AG04449 (cell line): ENCODE measurements at regions of chr6 and their contacts with region 1.

Region 1: DNA sequence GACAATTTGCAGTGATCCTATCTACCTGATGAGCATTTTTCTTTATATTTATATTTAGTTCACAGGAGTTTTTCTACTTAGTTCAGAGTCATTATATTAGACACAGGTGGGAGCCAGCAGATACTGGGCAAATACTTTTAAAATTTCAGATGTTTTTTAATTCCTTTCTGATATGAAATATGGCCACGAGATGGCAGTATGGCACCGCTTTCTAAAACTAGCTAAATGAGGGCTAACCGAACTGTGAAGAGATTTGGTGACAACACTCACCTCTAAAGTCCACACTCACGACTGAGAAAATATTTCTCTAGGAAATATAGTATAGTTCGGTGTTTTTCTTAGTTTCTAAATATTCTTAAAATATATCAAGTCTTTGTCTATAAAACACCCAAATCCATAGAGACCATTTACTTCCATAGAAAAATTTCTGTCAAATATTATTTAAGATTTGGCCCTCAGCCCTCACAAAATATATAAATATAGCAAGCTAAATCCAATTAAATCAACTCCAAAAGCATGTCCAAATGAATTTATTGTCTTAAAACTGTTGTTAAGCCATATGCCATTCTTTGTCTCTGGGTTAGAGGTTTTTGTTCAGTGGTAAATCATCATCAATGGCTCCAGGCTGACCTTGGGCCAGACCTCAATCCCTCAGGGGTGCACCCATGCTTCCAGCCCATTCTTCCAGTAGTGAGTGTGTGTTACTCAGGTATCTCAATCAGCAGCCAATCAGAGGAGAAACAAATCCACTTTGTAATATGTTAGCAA is 63.6 kb downstream of the HUS1B start:
- DNase-seq: peak; percentile 4
- H3K4me3 ChIP-seq: no peak overlapping the region
- CTCF ChIP-seq: peak; percentile 27

Region 2: GRCh38 chr6:446418-447366 is 146.6 kb before region 1 on chr6:
- CTCF ChIA-PET with region 1: no interaction called
- POLR2A ChIA-PET with region 1: no interaction called
- DNase-seq: no peak
- H3K4me3 ChIP-seq: no peak overlapping the region
- CTCF ChIP-seq: no peak

Region 3: DNA sequence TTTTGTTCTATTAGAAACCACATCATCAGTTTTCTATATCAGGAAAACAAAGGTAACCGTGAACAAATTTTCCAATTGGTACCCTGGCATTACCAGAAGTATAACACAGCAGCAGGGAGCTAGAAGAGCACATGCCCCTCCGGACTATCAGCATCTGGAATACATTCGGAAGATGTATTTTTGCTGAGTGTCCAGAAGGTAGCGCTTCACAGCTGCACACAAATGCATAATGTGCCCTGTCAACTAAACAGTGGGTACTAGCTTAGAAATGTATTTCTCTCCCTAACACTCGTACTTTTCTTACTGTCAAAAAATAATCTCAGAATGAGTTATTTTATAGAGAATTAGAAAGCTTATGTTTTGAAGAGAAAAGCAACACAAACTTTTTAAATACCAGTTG is 14.0 kb before region 1 on chr6:
- CTCF ChIA-PET with region 1: interaction called, 51 read pairs
- POLR2A ChIA-PET with region 1: no interaction called
- DNase-seq: no peak
- H3K4me3 ChIP-seq: no peak overlapping the region
- CTCF ChIP-seq: peak; percentile 46

Region 4: DNA sequence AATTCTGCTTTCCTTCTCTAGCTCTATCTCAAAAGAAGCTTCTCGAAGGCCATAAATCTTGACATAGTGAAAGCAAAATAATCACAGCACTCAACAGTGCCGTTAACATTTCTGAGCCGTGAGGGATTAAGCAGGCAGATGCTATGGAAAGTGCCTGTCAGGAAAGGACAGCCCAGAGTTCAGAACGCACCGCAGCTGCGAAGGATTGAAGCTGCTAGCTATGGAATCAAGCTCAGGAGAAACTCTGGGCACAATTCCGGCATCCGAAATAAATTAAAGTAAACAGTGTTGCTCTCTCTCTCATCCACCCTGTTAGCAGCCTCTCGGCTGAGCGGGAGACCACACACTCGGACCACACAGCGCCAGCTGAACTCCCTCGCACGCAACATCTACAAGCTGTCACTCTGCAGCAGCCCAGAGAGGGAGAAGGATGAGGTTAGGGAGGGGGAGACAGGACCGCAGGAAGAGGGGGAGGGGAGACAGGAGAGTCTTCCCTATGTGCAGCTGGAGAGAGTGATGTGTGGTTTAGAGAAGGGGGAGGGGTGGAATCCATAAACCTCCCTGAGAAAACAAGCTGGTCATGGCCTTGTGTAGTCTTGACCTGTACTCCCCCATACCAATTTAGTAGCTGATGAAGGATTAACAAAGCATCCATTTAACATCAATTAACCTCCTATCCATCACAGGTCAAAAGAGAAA is 90.6 kb after region 1 on chr6:
- CTCF ChIA-PET with region 1: interaction called, 11 read pairs
- POLR2A ChIA-PET with region 1: no interaction called
- DNase-seq: peak; percentile 38
- H3K4me3 ChIP-seq: peak overlapping the region; percentile 51
- CTCF ChIP-seq: no peak

Region 5: GRCh38 chr6:747028-747427 is 153.7 kb after region 1 on chr6:
- CTCF ChIA-PET with region 1: no interaction called
- POLR2A ChIA-PET with region 1: no interaction called
- DNase-seq: no peak
- H3K4me3 ChIP-seq: no peak overlapping the region
- CTCF ChIP-seq: no peak

Region 6: DNA sequence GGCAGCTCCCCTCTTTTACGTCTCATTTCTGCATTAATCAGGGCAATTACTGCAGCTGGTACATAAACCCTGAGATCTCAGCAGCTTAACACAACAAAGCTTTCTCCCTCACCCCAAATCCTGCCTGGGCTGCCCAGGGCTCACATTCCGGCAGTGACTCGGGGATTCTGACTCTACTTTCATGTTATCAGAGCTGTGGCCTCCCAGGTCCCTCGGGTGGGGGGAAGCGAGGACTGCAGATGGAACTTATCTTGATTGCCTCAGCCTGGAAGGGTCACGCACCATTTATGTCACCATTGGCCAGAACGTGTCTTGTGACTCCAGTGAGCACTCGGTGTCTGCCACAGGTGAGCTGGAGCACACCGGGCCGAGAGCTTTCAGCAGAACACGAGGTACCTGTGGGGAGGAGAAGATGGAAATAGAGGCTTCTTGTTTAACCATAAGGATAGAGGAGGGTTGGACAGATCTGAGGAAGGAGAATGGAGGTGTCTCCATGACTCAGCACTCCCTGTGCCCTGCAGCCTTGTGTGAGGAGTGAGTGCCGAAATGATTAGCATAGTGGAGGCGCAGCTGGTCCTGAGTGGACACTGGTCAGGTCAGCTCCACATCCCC is 188.1 kb after region 1 on chr6:
- CTCF ChIA-PET with region 1: interaction called, 11 read pairs
- POLR2A ChIA-PET with region 1: no interaction called
- DNase-seq: no peak
- H3K4me3 ChIP-seq: no peak overlapping the region
- CTCF ChIP-seq: no peak

Region 7: DNA sequence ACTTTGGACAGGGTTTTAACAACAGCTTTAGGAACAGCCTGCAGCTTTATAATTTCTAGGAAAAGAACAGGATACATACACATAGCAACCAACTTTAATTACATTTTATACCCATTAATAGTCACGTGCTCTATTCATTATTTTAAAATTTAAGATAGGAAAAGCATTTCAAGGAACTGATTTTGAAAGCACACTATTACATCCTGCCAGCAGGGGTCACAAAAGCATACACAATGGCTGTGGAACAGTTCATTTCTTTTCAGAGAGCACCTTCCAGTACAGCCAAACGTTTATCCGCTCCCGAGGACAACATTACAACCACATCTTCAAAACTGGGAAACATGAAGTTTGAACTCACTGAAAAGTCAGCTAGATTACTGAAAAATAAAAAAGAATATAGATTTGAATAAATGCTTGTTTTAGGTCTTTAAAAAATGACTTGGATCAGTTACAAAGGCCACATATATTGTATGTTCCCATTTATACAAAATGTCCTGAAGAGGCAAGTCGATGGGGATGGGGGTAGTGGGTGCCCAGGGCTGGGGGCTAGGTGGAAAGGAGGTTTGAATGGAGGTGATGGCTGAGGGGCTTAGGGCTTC is 204.3 kb after region 1 on chr6:
- CTCF ChIA-PET with region 1: interaction called, 10 read pairs
- POLR2A ChIA-PET with region 1: no interaction called
- DNase-seq: no peak
- H3K4me3 ChIP-seq: no peak overlapping the region
- CTCF ChIP-seq: peak; percentile 62

Region 8: DNA sequence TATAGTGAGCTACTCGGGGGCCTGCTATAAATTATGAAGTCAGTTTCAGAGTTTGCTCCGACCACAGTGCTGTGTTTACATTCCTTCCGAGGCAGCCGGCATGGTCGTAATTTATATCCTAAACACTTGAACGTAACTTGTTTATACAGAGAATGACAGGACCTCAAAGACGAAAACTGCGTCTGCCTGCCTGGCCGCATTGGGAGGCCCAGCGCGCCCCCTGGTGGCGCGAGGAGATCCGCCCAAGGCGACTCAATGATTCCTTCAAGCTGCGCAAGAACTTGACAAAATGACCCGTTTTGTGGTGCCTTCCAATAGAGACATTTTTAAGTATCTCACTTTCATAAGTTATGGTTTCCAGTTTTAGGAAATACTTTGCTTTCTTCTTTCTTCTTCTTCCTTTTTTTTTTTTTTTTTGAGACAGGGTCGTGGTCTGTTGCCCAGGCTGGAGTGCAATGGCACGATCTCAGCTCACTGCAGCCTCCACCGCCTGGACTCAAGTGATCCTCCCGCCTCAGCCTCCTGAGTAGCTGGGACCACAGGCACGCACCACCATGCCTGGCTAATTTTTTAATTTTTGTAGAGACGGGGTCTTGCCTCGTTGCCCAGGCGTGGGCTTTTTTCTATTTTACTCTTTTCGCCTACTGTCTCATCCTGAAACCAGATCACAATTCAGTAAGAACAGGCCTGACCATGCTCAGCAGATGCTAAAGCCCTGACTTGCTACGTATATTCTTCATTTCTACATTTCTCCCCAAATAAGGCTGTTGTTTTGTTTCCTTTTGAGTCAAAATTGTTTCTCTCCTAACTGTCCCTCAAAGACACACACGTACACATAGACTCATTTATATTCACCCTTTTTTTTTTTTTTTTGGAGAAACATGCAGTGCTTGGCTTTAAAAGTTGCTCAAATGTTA is 803.9 kb after region 1 on chr6:
- CTCF ChIA-PET with region 1: interaction called, 33 read pairs
- POLR2A ChIA-PET with region 1: no interaction called
- DNase-seq: no peak
- H3K4me3 ChIP-seq: no peak overlapping the region
- CTCF ChIP-seq: peak; percentile 92

Region 9: GRCh38 chr6:1436334-1437306 is 843.3 kb after region 1 on chr6:
- CTCF ChIA-PET with region 1: interaction called, 30 read pairs
- POLR2A ChIA-PET with region 1: no interaction called
- DNase-seq: peak; percentile 5
- H3K4me3 ChIP-seq: no peak overlapping the region
- CTCF ChIP-seq: peak; percentile 69